OCI-LY7 (cell line): ENCODE measurements at regions of chr9 and their contacts with region 1.

Region 1: DNA sequence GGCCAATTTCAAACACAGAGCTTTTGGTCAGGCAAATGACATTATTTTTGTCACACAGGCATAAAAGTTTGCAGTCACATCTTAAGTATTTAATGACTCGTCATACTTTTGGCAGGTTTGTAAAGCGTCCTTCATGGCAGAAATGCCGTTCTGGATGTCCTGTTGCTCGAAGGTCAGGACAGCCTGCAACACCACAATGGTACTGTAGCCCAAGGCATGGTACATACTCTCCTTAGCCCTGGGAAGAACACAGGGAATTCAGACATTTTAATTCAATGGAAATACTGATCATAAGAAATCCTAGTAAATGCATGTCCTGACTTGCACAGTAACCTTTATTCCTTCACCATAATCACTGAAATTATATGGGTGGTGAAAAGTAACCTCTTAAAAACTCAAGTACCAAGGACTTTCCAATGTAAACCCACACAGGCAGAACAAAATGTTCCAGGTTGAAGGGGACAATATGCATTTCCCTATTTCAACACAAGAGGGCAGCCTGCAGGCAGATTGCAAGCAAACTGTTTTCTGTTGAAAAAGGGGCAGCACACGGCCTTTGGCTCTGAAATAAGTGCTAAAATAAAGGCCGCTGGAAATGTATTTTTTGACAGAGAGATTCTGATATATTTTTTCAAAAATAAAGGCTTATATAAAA is 95.7 kb downstream of the TTC39B start:
- DNase-seq: peak; percentile 65
- H3K4me3 ChIP-seq: no peak overlapping the region
- H3K27ac ChIP-seq: no peak overlapping the region
- H3K4me1 ChIP-seq: no peaks in the 10 kb centered on the region
- CTCF ChIP-seq: peak; percentile 96

Region 2: DNA sequence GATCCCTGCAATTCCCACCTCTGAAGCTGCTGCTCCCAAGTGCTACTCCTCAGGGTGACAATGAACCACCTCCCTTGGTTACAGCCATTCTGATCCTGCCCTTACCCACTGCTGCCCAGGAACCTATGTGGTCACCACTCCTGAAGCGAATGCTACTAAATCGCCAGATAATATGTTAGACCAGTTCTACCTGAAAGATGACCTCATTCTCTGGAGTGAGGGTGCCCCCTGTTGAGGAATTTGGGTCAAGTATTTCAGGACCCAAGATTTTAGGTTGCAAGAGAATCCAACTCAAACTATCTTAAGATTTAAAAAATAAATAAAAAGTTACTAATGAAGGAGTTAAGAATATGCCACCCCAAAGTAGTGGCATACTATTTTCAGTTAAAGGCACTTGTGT is 205.6 kb after region 1 on chr9:
- CTCF ChIA-PET with region 1: no interaction called
- POLR2A ChIA-PET with region 1: no interaction called
- intact Hi-C with region 1: loop called (anchors 1 kb)
- DNase-seq: peak; percentile 30
- H3K4me3 ChIP-seq: no peak overlapping the region
- H3K27ac ChIP-seq: no peak overlapping the region
- H3K4me1 ChIP-seq: peaks cover 8% of the 10 kb centered on the region
- CTCF ChIP-seq: peak; percentile 69

Region 3: DNA sequence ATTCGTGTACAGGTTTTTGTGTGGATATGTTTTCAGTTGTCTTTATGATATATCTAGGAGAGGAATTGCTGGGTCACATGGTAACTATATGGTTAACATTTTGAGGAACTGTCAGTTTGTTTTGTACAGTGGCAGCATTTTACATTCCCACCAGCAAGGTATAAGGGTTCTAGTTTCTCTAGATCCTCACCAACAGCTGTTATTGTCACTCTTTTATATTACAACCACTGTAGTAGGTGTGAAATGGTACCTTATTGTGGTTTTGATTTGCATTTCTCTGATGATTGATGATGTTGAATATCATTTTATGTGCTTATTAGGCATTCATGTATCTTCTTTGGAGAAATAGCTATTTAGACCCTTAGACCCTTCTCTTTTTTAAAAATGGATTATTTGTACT is 424.5 kb after region 1 on chr9:
- CTCF ChIA-PET with region 1: no interaction called
- POLR2A ChIA-PET with region 1: no interaction called
- intact Hi-C with region 1: loop called (anchors 5 kb)
- DNase-seq: no peak
- H3K4me3 ChIP-seq: no peak overlapping the region
- H3K27ac ChIP-seq: no peak overlapping the region
- H3K4me1 ChIP-seq: no peaks in the 10 kb centered on the region
- CTCF ChIP-seq: no peak